OCI-LY7 (cell line): ENCODE measurements at regions of chr7 and their contacts with region 1.

Region 1: DNA sequence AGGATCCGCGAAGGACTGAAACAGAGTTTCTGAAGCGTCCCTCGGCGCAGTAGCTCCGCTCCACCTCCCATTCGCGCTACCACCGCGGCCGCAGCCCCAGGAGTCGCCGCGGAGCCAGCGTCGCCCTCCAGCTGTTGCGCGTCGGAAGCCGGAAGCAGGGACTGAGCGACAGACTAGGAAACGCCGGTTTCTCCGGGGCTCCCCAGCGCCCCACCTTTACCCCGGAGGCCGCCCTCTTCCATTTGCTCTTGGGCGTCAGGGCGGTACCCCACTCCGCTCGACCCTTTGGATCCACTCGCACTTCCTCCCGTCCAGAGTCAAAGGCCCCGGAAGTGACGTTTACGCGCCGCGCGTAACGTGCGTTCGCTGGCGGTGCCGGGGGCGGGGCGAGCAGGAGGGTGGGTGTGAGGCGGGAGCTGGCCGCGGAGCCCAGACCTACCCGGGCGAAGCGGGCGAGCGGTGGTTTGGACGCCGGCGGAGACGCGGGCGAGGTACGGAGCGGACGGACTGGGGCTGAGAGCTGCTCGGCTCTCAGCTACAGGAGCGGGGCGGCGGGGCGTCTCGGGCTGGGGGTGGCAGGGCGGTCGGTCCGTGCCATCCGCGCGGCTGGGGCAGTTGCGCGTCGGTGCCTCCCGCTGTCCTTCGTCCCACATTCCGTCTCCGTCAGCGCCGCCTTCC is at the start of gene RABGEF1:
- DNase-seq: peak; percentile 97
- H3K4me3 ChIP-seq: peak within 1 kb of the TSS; percentile 77
- H3K27ac ChIP-seq: peak within 1 kb of the TSS; percentile 80
- H3K4me1 ChIP-seq: peaks cover 39% of the 10 kb centered on the region
- CTCF ChIP-seq: no peak
- total RNA-seq, gene RABGEF1: 18.2 and 21.0 TPM in 2 replicates

Region 2: GRCh38 chr7:66804001-66804400 is 63.6 kb after region 1 on chr7:
- CTCF ChIA-PET with region 1: no interaction called
- POLR2A ChIA-PET with region 1: no interaction called
- intact Hi-C with region 1: no loop called
- DNase-seq: no peak
- H3K4me3 ChIP-seq: no peak overlapping the region
- H3K27ac ChIP-seq: no peak overlapping the region
- H3K4me1 ChIP-seq: no peaks in the 10 kb centered on the region
- CTCF ChIP-seq: no peak

Region 3: GRCh38 chr7:66844552-66845378 is 104.3 kb after region 1 on chr7:
- CTCF ChIA-PET with region 1: no interaction called
- POLR2A ChIA-PET with region 1: interaction called, 8 read pairs
- intact Hi-C with region 1: loop called (anchors 5 kb)
- DNase-seq: peak; percentile 99
- H3K4me3 ChIP-seq: peak overlapping the region; percentile 88
- H3K27ac ChIP-seq: peak overlapping the region; percentile 42
- H3K4me1 ChIP-seq: peaks cover 17% of the 10 kb centered on the region
- CTCF ChIP-seq: 0 out of 2 replicates have a peak, but pooled peaks have one; percentile 28